OCI-LY7 (cell line): ENCODE measurements at regions of chr12 and their contacts with region 1.

Region 1: GRCh38 chr12:25074954-25075353 is 120.0 kb downstream of the DNAI7 start:
- DNase-seq: no peak
- H3K4me3 ChIP-seq: no peak overlapping the region
- H3K27ac ChIP-seq: no peak overlapping the region
- H3K4me1 ChIP-seq: no peaks in the 10 kb centered on the region
- CTCF ChIP-seq: no peak

Region 2: GRCh38 chr12:25058658-25059058 is 16.3 kb before region 1 on chr12:
- CTCF ChIA-PET with region 1: no interaction called
- POLR2A ChIA-PET with region 1: interaction called, 24 read pairs
- intact Hi-C with region 1: no loop called
- DNase-seq: peak; percentile 60
- H3K4me3 ChIP-seq: peak overlapping the region; percentile 90
- H3K27ac ChIP-seq: peak overlapping the region; percentile 94
- H3K4me1 ChIP-seq: peaks cover 55% of the 10 kb centered on the region
- CTCF ChIP-seq: no peak

Region 3: DNA sequence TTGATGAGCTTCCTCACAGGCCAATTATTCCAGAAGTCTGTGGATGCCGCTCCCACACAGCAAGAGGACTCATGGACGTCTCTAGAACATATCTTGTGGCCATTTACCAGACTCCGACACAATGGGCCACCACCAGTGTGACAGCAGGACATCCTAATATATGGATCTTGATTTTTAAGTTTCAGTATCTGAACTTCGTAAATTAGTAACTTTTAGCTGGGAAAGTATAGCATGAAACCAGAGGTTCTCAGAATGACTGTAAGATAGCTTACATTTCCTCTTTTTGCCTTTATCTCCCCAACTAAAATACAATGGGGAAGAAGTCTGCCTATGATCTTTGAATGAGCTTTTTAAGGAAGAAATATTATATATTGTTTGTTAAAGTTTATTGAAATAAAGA is 33.0 kb after region 1 on chr12:
- CTCF ChIA-PET with region 1: no interaction called
- POLR2A ChIA-PET with region 1: no interaction called
- intact Hi-C with region 1: loop called (anchors 5 kb)
- DNase-seq: no peak
- H3K4me3 ChIP-seq: no peak overlapping the region
- H3K27ac ChIP-seq: peak overlapping the region; percentile 8
- H3K4me1 ChIP-seq: no peaks in the 10 kb centered on the region
- CTCF ChIP-seq: no peak